ENCODE measurements at regions of chr5 and their contacts with region 1.

Region 1: GRCh38 chr5:66306105-66306843 is 162.2 kb downstream of the SREK1 start:
- DNase-seq: peak; percentile 49
- ATAC-seq: peak; percentile 65
- H3K4me3 Mint-ChIP-seq: no peak overlapping the region
- H3K27ac Mint-ChIP-seq: no peak overlapping the region
- H3K4me1 Mint-ChIP-seq: peaks cover 2% of the 10 kb centered on the region
- H3K27me3 Mint-ChIP-seq: peaks cover 19% of the 10 kb centered on the region

Region 2: GRCh38 chr5:66324357-66324756 is 18.1 kb after region 1 on chr5:
- CTCF ChIA-PET with region 1: interaction called, 13 read pairs
- DNase-seq: no peak
- ATAC-seq: no peak
- H3K4me3 Mint-ChIP-seq: no peak overlapping the region
- H3K27ac Mint-ChIP-seq: no peak overlapping the region
- H3K4me1 Mint-ChIP-seq: no peaks in the 10 kb centered on the region
- H3K27me3 Mint-ChIP-seq: peaks cover 15% of the 10 kb centered on the region

Region 3: DNA sequence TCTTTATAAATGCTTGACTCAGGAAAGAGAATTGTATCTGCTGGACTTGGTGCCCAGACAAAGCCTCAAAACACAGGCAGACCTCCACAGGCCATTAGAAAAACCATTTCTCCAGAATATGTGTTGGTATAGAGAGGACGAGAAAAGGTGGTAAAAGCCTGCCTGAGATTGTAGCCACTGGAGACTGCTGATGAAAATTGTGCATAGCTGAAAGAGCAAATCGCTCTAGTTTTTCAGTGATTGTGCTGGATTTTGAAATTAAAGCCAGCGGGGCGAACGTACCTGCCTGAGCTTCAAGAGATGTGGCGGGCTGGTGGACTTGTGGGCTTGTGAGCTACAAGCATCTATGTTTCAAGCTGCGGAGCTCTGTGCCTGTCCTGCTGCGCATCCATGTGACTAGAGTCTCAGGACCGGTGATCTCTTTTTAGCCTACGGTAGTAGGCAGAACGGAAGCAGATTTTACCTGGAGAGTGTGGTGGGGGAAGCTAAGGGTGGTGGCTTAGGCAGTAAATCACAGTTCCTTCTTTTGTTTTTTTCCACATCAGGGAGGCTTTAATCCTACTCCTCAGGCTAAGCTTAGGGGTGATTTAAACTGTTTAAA is 31.5 kb after region 1 on chr5:
- CTCF ChIA-PET with region 1: interaction called, 10 read pairs
- DNase-seq: no peak
- ATAC-seq: no peak
- H3K4me3 Mint-ChIP-seq: no peak overlapping the region
- H3K27ac Mint-ChIP-seq: no peak overlapping the region
- H3K4me1 Mint-ChIP-seq: no peaks in the 10 kb centered on the region
- H3K27me3 Mint-ChIP-seq: peaks cover 22% of the 10 kb centered on the region

Region 4: GRCh38 chr5:66757188-66757833 is 451.0 kb after region 1 on chr5:
- CTCF ChIA-PET with region 1: interaction called, 32 read pairs
- DNase-seq: peak; percentile 57
- ATAC-seq: no peak
- H3K4me3 Mint-ChIP-seq: no peak overlapping the region
- H3K27ac Mint-ChIP-seq: no peak overlapping the region
- H3K4me1 Mint-ChIP-seq: no peaks in the 10 kb centered on the region
- H3K27me3 Mint-ChIP-seq: peaks cover 47% of the 10 kb centered on the region

Region 5: GRCh38 chr5:66769839-66770617 is 463.8 kb after region 1 on chr5:
- CTCF ChIA-PET with region 1: interaction called, 11 read pairs
- DNase-seq: no peak
- ATAC-seq: no peak
- H3K4me3 Mint-ChIP-seq: no peak overlapping the region
- H3K27ac Mint-ChIP-seq: no peak overlapping the region
- H3K4me1 Mint-ChIP-seq: no peaks in the 10 kb centered on the region
- H3K27me3 Mint-ChIP-seq: peaks cover 29% of the 10 kb centered on the region

Region 6: GRCh38 chr5:66864331-66864840 is 558.1 kb after region 1 on chr5:
- CTCF ChIA-PET with region 1: interaction called, 11 read pairs
- DNase-seq: peak; percentile 65
- ATAC-seq: peak; percentile 86
- H3K4me3 Mint-ChIP-seq: no peak overlapping the region
- H3K27ac Mint-ChIP-seq: peak overlapping the region; percentile 6
- H3K4me1 Mint-ChIP-seq: peaks cover 31% of the 10 kb centered on the region
- H3K27me3 Mint-ChIP-seq: peaks cover 26% of the 10 kb centered on the region

Measured in activated CD8-positive, alpha-beta memory T cell treated with anti-CD3 and anti-CD28 coated beads, Interleukin-2, amount 10 ng/mL, durations not matched to agents 7 days and 5 days (primary cell).